CD8-positive, alpha-beta T cell (primary cell): ENCODE measurements at regions of chr14 and their contacts with region 1.

Region 1: DNA sequence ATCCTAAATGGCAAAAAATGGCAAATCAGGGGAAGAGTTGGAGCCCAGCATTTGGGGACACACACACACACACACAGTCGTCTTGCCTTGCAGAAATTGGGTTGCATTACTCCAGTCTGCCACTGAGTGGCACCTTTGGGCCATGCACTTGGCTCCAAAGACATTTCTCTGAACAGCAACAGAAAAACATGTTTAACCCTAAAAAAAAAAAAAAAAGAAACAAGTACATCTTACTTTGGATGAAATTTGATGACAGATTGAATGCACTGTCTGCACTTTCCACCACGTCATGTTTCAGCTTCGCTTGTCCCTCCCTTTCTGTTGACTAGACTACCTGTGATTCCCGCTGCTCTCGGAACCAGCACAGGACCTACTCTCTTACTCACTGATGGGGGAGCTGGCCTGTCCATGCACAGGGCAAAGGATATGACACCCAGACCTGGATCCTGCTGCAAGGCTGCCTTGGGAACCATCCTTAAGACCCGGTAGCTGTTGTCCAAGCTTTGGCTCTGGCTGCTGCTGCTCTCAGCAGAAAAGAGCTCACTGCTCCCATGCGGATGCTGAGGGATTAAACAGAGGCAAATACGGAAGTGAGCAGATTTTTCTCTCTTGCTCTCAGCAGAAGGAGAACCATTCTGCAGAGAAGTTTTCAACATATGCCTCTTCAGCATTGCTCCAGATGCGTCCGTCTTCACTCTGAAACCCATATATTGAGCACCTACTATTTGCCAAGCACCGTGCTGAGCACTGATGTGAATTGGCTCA is 376.8 kb downstream of the DPF3 start:
- DNase-seq: peak; percentile 46 to 86 (median 71)
- ATAC-seq: peak; percentile 60
- H3K4me3 ChIP-seq: no peak overlapping the region
- H3K4me3 Mint-ChIP-seq: no peak overlapping the region
- H3K27ac ChIP-seq: no peak overlapping the region
- H3K27ac Mint-ChIP-seq: no peak overlapping the region
- H3K4me1 ChIP-seq: peaks cover 32% of the 10 kb centered on the region
- H3K4me1 Mint-ChIP-seq: peaks cover 41% of the 10 kb centered on the region
- H3K27me3 ChIP-seq: no peaks in the 10 kb centered on the region
- H3K27me3 Mint-ChIP-seq: no peaks in the 10 kb centered on the region
- CTCF ChIP-seq: peak; percentile 74

Region 2: GRCh38 chr14:72503696-72504368 is 13.3 kb before region 1 on chr14:
- CTCF ChIA-PET with region 1: interaction called, 14 read pairs
- POLR2A ChIA-PET with region 1: no interaction called
- intact Hi-C with region 1: no loop called
- DNase-seq: peak in 1 of 9 experiments; percentile 17
- ATAC-seq: no peak
- H3K4me3 ChIP-seq: no peak overlapping the region
- H3K4me3 Mint-ChIP-seq: no peak overlapping the region
- H3K27ac ChIP-seq: no peak overlapping the region
- H3K27ac Mint-ChIP-seq: no peak overlapping the region
- H3K4me1 ChIP-seq: no peaks in the 10 kb centered on the region
- H3K4me1 Mint-ChIP-seq: no peaks in the 10 kb centered on the region
- H3K27me3 ChIP-seq: no peaks in the 10 kb centered on the region
- H3K27me3 Mint-ChIP-seq: peaks cover 2% of the 10 kb centered on the region
- CTCF ChIP-seq: no peak

Region 3: GRCh38 chr14:72549859-72550258 is 32.7 kb after region 1 on chr14:
- CTCF ChIA-PET with region 1: no interaction called
- POLR2A ChIA-PET with region 1: no interaction called
- intact Hi-C with region 1: no loop called
- DNase-seq: no peak
- ATAC-seq: no peak
- H3K4me3 ChIP-seq: no peak overlapping the region
- H3K4me3 Mint-ChIP-seq: no peak overlapping the region
- H3K27ac ChIP-seq: no peak overlapping the region
- H3K27ac Mint-ChIP-seq: no peak overlapping the region
- H3K4me1 ChIP-seq: no peaks in the 10 kb centered on the region
- H3K4me1 Mint-ChIP-seq: no peaks in the 10 kb centered on the region
- H3K27me3 ChIP-seq: no peaks in the 10 kb centered on the region
- H3K27me3 Mint-ChIP-seq: peaks cover 4% of the 10 kb centered on the region
- CTCF ChIP-seq: no peak

Region 4: GRCh38 chr14:72679536-72680151 is 162.5 kb after region 1 on chr14:
- CTCF ChIA-PET with region 1: no interaction called
- POLR2A ChIA-PET with region 1: no interaction called
- intact Hi-C with region 1: no loop called
- DNase-seq: no peak
- ATAC-seq: no peak
- H3K4me3 ChIP-seq: no peak overlapping the region
- H3K4me3 Mint-ChIP-seq: no peak overlapping the region
- H3K27ac ChIP-seq: no peak overlapping the region
- H3K27ac Mint-ChIP-seq: no peak overlapping the region
- H3K4me1 ChIP-seq: no peaks in the 10 kb centered on the region
- H3K4me1 Mint-ChIP-seq: no peaks in the 10 kb centered on the region
- H3K27me3 ChIP-seq: no peaks in the 10 kb centered on the region
- H3K27me3 Mint-ChIP-seq: no peaks in the 10 kb centered on the region
- CTCF ChIP-seq: no peak

Region 5: DNA sequence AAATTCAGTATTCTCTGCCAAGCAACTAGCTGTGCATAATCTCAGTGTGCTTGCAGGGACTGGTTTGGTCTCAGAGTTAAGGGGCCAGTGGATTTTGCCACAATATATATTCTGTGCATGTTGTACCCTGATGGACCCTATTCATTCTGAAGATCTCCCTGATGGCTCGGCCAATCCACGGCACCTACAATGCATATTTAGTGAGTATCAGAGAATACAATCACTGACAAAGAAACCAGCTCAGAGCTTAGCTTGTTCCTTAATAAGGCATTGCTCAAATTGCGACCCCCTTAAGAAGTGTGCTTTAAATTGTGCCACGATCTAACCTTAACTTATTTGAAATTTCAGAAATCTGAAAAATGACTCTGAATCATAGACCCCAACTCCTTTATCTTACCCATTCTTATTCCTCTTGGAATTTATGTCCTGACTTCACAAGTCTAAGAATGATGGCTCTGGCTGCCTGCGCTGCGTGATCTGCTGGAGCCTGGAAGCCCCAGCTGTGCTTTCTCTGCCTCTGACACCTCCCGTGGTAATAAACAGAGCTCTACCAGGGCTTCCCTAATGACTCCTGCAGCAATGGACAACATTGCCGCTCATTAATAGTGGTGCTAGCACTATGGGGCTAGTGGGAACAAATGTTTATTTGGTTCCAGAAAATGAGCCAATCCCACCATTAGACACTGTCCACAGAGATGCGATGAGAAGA is 400.1 kb after region 1 on chr14:
- CTCF ChIA-PET with region 1: interaction called, 343 read pairs
- POLR2A ChIA-PET with region 1: no interaction called
- intact Hi-C with region 1: no loop called
- DNase-seq: no peak
- ATAC-seq: no peak
- H3K4me3 ChIP-seq: no peak overlapping the region
- H3K4me3 Mint-ChIP-seq: no peak overlapping the region
- H3K27ac ChIP-seq: no peak overlapping the region
- H3K27ac Mint-ChIP-seq: no peak overlapping the region
- H3K4me1 ChIP-seq: no peaks in the 10 kb centered on the region
- H3K4me1 Mint-ChIP-seq: no peaks in the 10 kb centered on the region
- H3K27me3 ChIP-seq: peaks cover 0 to 10% of the 10 kb centered on the region in 2 experiments
- H3K27me3 Mint-ChIP-seq: peaks cover 19% of the 10 kb centered on the region
- CTCF ChIP-seq: no peak

Region 6: GRCh38 chr14:72926292-72927028 is 409.3 kb after region 1 on chr14 and contains the start of gene DCAF4:
- CTCF ChIA-PET with region 1: interaction called, 11 read pairs
- POLR2A ChIA-PET with region 1: no interaction called
- intact Hi-C with region 1: no loop called
- DNase-seq: peak; percentile 89 to 97 (median 93)
- ATAC-seq: peak; percentile 93
- H3K4me3 ChIP-seq: peak within 1 kb of the TSS; percentile 79 to 87
- H3K4me3 Mint-ChIP-seq: peak within 1 kb of the TSS; percentile 94
- H3K27ac ChIP-seq: peak within 1 kb of the TSS; percentile 67 to 76
- H3K27ac Mint-ChIP-seq: peak within 1 kb of the TSS; percentile 92
- H3K4me1 ChIP-seq: peaks cover 13% of the 10 kb centered on the region
- H3K4me1 Mint-ChIP-seq: peaks cover 15% of the 10 kb centered on the region
- H3K27me3 ChIP-seq: no peaks in the 10 kb centered on the region
- H3K27me3 Mint-ChIP-seq: peaks cover 2% of the 10 kb centered on the region
- CTCF ChIP-seq: no peak
- total RNA-seq, gene DCAF4: 21.9 to 26.6 TPM

Region 7: GRCh38 chr14:72948481-72949138 is 431.5 kb after region 1 on chr14:
- CTCF ChIA-PET with region 1: interaction called, 56 read pairs
- POLR2A ChIA-PET with region 1: no interaction called
- intact Hi-C with region 1: loop called (anchors 1 kb)
- DNase-seq: peak; percentile 39 to 73 (median 60)
- ATAC-seq: peak; percentile 29
- H3K4me3 ChIP-seq: no peak overlapping the region
- H3K4me3 Mint-ChIP-seq: no peak overlapping the region
- H3K27ac ChIP-seq: no peak overlapping the region
- H3K27ac Mint-ChIP-seq: no peak overlapping the region
- H3K4me1 ChIP-seq: no peaks in the 10 kb centered on the region
- H3K4me1 Mint-ChIP-seq: no peaks in the 10 kb centered on the region
- H3K27me3 ChIP-seq: no peaks in the 10 kb centered on the region
- H3K27me3 Mint-ChIP-seq: no peaks in the 10 kb centered on the region
- CTCF ChIP-seq: peak; percentile 86

Region 8: GRCh38 chr14:73472185-73473114 is 955.3 kb after region 1 on chr14:
- CTCF ChIA-PET with region 1: no interaction called
- POLR2A ChIA-PET with region 1: no interaction called
- intact Hi-C with region 1: loop called (anchors 10 kb)
- DNase-seq: peak in 2 of 9 experiments; percentile 67 to 74
- ATAC-seq: peak; percentile 86
- H3K4me3 ChIP-seq: no peak overlapping the region
- H3K4me3 Mint-ChIP-seq: no peak overlapping the region
- H3K27ac ChIP-seq: no peak overlapping the region
- H3K27ac Mint-ChIP-seq: no peak overlapping the region
- H3K4me1 ChIP-seq: no peaks in the 10 kb centered on the region
- H3K4me1 Mint-ChIP-seq: peaks cover 7% of the 10 kb centered on the region
- H3K27me3 ChIP-seq: no peaks in the 10 kb centered on the region
- H3K27me3 Mint-ChIP-seq: peaks cover 2% of the 10 kb centered on the region
- CTCF ChIP-seq: peak; percentile 71